Activated CD8-positive, alpha-beta T cell treated with anti-CD3 and anti-CD28 coated beads for 36 hours (primary cell): ENCODE measurements at regions of chr10 and their contacts with region 1.

Region 1: DNA sequence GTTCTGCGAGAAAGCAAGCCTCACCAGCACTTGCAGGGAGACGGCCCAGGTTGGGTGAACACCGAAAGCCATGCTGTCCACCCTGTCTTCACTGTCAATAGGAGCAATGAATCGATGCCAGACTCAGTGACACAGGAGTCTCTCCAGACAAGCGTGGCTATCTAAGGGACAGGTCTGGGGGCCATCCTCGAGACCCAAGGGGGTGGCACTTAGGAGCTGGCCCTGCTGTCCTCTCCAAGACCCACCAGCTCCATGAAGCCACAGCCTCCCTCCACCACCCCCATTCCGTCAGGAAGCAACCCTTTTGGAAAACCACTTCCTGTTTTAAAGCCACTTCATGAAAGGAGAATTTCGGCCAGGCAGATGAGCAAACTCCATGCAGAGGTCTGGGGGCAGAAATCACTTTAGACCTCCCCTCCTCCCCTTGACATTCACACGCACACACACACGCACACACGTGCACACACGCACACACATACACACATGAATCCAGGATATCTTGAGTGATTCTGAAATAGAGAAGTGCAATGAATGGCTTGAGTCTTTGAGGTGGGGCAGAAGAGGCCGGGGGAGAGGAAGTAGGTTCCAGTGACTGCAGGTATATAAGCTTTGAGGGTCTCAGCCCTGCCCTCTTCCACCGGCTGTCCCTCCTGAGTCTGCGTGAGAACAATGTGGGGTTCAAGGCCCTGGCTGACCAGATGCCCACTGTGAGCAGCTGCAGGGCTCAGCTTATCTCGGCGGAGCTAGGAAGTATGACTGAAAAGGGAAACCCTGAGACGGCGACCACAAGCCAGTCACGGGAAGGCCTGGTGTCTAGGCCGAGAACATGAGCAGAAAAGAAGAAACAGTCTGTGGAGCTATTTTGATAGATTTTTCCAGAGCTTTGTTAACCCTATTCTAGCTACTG is 25.0 kb downstream of the RGS10 start:
- DNase-seq: peak; percentile 86
- ATAC-seq: peak; percentile 54
- H3K4me3 Mint-ChIP-seq: peak overlapping the region; percentile 53
- H3K27ac Mint-ChIP-seq: peak overlapping the region; percentile 91
- H3K4me1 Mint-ChIP-seq: peaks cover 76% of the 10 kb centered on the region
- H3K27me3 Mint-ChIP-seq: no peaks in the 10 kb centered on the region
- CTCF ChIP-seq: no peak

Region 2: GRCh38 chr10:118712930-118713634 is 804.4 kb before region 1 on chr10:
- CTCF ChIA-PET with region 1: no interaction called
- POLR2A ChIA-PET with region 1: no interaction called
- intact Hi-C with region 1: no loop called
- DNase-seq: no peak
- ATAC-seq: no peak
- H3K4me3 Mint-ChIP-seq: no peak overlapping the region
- H3K27ac Mint-ChIP-seq: no peak overlapping the region
- H3K4me1 Mint-ChIP-seq: peaks cover 14% of the 10 kb centered on the region
- H3K27me3 Mint-ChIP-seq: no peaks in the 10 kb centered on the region
- CTCF ChIP-seq: peak; percentile 13

Region 3: GRCh38 chr10:119502209-119502608 is 15.3 kb before region 1 on chr10:
- CTCF ChIA-PET with region 1: interaction called, 5 read pairs
- POLR2A ChIA-PET with region 1: interaction called, 58 read pairs
- intact Hi-C with region 1: no loop called
- DNase-seq: peak; percentile 93
- ATAC-seq: peak; percentile 79
- H3K4me3 Mint-ChIP-seq: peak overlapping the region; percentile 60
- H3K27ac Mint-ChIP-seq: peak overlapping the region; percentile 98
- H3K4me1 Mint-ChIP-seq: peaks cover 93% of the 10 kb centered on the region
- H3K27me3 Mint-ChIP-seq: no peaks in the 10 kb centered on the region
- CTCF ChIP-seq: no peak

Region 4: DNA sequence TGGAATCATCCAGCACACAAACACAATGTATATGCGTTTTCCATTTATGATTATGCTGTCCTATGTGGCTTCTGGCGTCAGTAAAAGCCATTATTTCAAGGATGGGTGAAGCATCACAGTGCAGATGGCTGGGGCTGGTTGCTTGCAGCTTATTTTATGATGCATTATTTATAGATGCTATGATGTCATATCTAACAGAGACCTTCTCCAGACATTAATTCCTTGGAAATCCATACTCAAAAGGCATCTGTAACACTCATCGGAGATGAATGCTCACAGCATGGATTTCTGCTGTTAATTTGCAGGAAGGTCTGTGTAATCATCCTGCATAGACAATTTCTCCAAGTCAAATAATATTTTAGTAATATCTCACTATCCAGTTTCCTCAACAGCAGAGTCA is 17.8 kb after region 1 on chr10:
- CTCF ChIA-PET with region 1: interaction called, 38 read pairs
- POLR2A ChIA-PET with region 1: interaction called, 58 read pairs
- intact Hi-C with region 1: no loop called
- DNase-seq: no peak
- ATAC-seq: no peak
- H3K4me3 Mint-ChIP-seq: peak overlapping the region; percentile 71
- H3K27ac Mint-ChIP-seq: peak overlapping the region; percentile 93
- H3K4me1 Mint-ChIP-seq: peaks cover 75% of the 10 kb centered on the region
- H3K27me3 Mint-ChIP-seq: no peaks in the 10 kb centered on the region
- CTCF ChIP-seq: no peak